WTC11 (cell line): ENCODE measurements at regions of chr1 and their contacts with region 1.

Region 1: DNA sequence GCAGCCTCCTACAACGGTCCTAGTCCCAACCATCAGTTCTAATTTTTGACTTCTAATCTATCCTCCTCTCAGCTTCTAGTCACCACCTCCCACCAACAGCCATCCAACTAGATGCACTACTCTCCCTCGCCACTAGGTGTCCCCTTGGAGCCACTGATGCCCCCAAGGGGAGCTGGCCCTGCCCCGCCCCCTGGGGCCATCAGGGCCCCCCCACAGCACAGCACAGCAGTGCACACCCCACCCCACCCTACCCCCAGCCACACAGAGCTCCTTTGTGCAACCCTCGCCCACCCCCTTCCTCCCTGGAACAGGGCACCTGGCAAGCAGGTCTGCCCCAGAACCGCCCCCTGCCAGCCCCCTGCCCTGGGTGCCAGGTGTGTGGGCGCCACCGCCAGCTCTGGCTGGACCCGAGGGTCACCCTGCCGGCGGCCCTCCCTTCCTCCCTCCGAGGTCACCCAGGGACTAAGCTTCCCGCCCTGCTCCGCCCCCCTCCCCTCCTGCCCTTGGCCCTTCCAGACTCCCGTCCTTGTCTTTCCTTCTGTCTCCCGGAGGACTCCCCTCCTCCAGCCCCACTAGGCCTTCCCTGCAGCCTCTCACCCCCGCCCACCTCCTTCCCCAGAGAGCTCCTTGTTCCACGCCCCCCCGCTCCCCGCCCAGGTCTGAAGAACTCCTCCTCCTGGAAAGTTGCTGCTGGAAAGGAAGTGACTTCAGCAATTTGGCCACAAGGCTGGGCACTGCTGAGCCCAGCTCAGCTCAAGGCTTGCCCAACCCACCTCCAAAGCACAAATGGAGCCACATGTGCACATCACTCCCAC is 47.0 kb downstream of the AHDC1 start:
- DNase-seq: peak; percentile 91
- ATAC-seq: peak; percentile 76
- H3K4me3 Mint-ChIP-seq: peak overlapping the region; percentile 50
- H3K27ac Mint-ChIP-seq: peak overlapping the region; percentile 99
- H3K4me1 Mint-ChIP-seq: peaks cover 54% of the 10 kb centered on the region
- H3K27me3 Mint-ChIP-seq: no peaks in the 10 kb centered on the region
- CTCF ChIP-seq: peak; percentile 97

Region 2: DNA sequence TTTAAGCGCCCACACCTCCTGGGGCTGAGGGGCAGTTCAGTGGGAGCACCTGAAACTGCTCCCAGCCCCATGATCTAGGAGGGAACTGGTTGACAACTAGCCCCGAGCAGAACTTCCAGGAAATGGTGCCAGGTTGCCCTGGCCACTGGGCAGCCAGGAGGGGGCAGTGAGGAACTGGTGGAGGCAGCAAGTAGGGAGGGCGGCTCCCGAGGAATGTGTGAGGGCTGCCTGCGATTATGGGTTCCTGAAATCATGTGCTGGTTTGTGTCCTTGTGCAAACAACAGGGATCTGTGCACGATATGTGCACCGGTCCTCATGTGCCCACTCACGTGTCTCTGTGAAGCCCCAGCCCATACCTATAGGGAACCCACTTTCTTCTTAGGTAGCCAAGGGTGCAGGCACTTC is 154.6 kb before region 1 on chr1:
- CTCF ChIA-PET with region 1: interaction called, 27 read pairs
- POLR2A ChIA-PET with region 1: interaction called, 4 read pairs
- DNase-seq: peak; percentile 69
- ATAC-seq: peak; percentile 18
- H3K4me3 Mint-ChIP-seq: no peak overlapping the region
- H3K27ac Mint-ChIP-seq: peak overlapping the region; percentile 91
- H3K4me1 Mint-ChIP-seq: peaks cover 78% of the 10 kb centered on the region
- H3K27me3 Mint-ChIP-seq: no peaks in the 10 kb centered on the region
- CTCF ChIP-seq: no peak

Region 3: GRCh38 chr1:27504588-27505419 is 52.2 kb before region 1 on chr1:
- CTCF ChIA-PET with region 1: interaction called, 22 read pairs
- POLR2A ChIA-PET with region 1: no interaction called
- DNase-seq: peak; percentile 58
- ATAC-seq: peak; percentile 83
- H3K4me3 Mint-ChIP-seq: no peak overlapping the region
- H3K27ac Mint-ChIP-seq: no peak overlapping the region
- H3K4me1 Mint-ChIP-seq: peaks cover 33% of the 10 kb centered on the region
- H3K27me3 Mint-ChIP-seq: no peaks in the 10 kb centered on the region
- CTCF ChIP-seq: no peak

Region 4: DNA sequence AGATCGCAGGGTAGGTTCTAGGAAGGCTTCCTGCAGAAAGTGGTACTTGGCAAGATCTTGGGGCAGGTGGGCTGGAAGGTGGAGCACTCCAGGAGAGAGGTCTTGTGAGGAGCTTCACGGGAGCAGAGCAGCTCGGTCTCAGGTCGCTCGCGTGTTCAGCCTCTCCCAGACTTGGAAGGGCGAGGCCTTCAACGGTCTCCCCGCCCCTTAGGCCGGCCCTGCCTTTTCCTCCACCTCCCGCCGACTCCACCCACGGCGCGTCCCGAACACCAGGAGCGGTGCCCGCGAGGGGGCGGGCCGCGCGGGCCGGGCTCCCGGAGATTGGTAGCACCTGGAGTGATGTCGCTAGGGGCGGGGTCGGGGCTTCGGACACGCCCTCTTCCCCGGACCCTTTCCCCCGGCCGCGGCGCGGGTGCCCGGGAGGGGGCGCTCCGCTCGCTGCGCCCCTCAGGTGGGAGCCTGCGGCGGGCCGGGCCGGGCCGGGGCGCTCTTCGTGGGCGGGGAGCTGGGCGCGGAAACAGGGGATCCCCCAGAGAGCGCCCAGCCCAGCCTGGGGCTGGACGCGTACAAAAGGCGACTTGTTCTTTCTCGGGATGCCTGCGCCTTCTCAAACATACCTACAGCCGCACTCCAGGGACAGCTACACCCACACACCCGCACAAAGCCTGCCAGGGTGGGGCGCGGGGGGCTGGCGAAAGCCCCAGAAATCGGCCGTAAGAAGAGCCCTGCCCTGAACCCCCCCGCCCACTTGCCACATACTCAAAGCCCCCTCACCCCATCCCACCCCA is 11.5 kb after region 1 on chr1:
- CTCF ChIA-PET with region 1: interaction called, 489 read pairs
- POLR2A ChIA-PET with region 1: interaction called, 17 read pairs
- DNase-seq: peak; percentile 93
- ATAC-seq: peak; percentile 59
- H3K4me3 Mint-ChIP-seq: peak overlapping the region; percentile 58
- H3K27ac Mint-ChIP-seq: peak overlapping the region; percentile 39; the same call in 1 of the 2 replicates
- H3K4me1 Mint-ChIP-seq: peaks cover 88% of the 10 kb centered on the region
- H3K27me3 Mint-ChIP-seq: no peaks in the 10 kb centered on the region
- CTCF ChIP-seq: peak; percentile 70

Region 5: DNA sequence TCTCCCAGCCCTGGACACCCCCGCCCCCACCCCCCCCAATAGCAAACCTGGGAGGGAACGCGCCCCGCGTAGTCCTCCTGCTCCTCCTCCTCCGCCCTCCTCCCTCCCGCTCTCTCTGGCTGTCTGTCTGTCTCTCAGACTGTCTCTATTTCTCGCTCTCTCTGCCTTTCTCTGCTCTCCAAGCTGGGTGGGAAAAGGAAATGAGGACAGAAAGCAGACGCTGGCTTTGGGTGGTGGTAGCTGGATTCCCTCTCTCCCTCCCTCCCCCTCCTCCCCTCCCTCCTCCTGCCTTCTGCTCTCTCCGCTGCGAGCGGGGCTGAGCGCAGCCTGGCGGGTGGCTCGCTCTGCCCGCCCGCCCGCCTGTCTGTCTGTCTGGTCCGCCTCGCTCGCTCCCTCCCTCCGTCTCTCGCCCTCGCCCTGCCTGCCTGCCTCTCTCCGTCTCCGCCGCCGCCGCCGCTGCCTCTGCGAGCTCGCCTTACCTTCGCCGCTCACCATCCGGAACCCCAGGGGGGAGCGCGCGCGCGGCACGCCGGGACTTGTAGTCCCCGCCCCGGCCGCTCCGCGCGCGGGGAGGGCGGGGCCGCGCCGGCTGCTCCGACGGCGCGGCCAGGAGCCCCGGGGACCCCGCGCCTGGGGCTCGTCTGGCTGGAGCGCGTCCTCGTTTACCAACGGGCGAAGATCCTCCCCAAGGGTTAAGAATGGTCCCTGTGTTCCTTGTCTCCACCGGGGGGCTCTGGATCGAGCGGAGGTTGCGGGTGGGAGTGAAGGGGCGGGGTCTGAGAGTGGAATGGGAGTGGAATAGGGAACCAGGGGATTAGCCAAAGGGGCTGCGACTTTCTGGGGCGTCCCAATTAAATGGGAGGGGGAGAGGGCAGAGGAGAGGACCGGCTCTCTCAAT is 46.9 kb after region 1 on chr1 and contains the start of gene AHDC1:
- CTCF ChIA-PET with region 1: interaction called, 376 read pairs
- POLR2A ChIA-PET with region 1: interaction called, 21 read pairs
- DNase-seq: peak; percentile 96
- ATAC-seq: peak; percentile 11
- H3K4me3 Mint-ChIP-seq: peak within 1 kb of the TSS; percentile 92
- H3K27ac Mint-ChIP-seq: peak within 1 kb of the TSS; percentile 88
- H3K4me1 Mint-ChIP-seq: peaks cover 61% of the 10 kb centered on the region
- H3K27me3 Mint-ChIP-seq: no peaks in the 10 kb centered on the region; the same call in 1 of the 2 replicates
- CTCF ChIP-seq: no peak
- total RNA-seq, gene AHDC1: 31.6 to 49.0 TPM (median 32.6 TPM) in 3 replicates

Region 6: DNA sequence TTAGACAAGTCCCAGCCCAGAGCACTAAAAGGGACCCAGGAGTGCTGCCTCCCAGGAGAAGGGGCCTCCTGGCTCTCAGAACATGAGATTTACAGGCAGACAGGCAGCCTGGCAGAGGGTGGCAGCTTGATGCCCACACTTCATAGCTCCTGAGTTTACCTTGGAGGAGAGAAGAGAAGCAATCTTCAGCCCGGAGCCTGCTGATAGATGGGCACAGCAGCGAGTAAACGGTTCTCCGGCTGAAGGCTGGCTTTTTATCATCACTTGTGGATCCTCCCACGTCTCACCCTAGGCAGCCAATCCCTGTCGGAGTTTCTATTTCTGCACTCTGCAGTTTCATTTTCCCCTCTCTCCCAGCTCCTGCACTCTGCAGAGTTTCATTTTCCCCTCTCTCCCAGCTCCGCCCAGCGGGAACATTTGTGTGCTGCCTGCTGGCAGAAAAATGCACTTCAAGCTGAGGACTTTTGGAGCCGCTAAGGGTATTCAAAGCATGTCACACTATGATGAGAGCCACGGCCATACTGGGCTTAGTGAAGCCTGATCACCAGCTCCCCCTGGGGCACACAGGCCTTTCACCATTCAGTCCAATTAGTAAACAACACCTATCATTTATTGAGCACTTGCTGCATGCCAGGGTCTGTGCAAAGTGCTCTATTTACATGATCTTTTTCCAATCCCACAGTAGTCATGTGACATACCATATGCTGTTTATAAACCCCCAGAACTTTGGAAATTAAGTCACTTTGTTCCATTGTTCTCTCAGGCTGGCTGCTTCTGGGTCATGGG is 115.2 kb after region 1 on chr1 and contains the start of gene IFI6:
- CTCF ChIA-PET with region 1: interaction called, 14 read pairs
- POLR2A ChIA-PET with region 1: no interaction called
- DNase-seq: peak; percentile 60
- ATAC-seq: peak; percentile 84
- H3K4me3 Mint-ChIP-seq: peak within 1 kb of the TSS; percentile 75
- H3K27ac Mint-ChIP-seq: peak within 1 kb of the TSS; percentile 94
- H3K4me1 Mint-ChIP-seq: peaks cover 12% of the 10 kb centered on the region
- H3K27me3 Mint-ChIP-seq: peaks cover 19% of the 10 kb centered on the region
- CTCF ChIP-seq: no peak
- total RNA-seq, gene IFI6: 4.5 to 9.4 TPM (median 6.4 TPM) in 3 replicates